ENCODE measurements at regions of chr4 and their contacts with region 1.

Region 1: GRCh38 chr4:21738821-21739220 is 209.8 kb downstream of the KCNIP4 start:
- DNase-seq: no peak
- ATAC-seq: no peak
- H3K4me3 ChIP-seq: no peak overlapping the region
- H3K27ac ChIP-seq: no peak overlapping the region
- H3K4me1 ChIP-seq: no peaks in the 10 kb centered on the region
- H3K27me3 ChIP-seq: no peaks in the 10 kb centered on the region
- CTCF ChIP-seq: no peak

Region 2: DNA sequence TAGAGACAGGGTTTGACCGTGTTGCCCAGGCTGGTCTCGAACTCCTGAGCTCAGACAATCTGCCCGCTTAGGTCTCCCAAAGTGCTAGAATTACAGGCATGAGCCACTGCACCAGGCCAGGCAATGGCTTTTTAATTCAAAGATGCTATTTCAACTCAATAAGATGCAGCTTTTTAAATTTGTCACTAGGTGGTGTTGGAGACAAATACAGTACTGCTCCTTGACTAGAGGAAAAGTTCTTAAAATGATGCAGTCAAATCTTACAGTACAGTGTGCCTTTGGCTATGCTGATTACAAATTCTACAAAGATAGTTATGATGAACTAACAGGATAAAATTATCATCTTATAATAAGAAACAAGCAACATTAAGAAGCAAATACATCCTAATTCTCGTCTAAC is 231.4 kb before region 1 on chr4:
- intact Hi-C with region 1: no loop called
- DNase-seq: no peak
- ATAC-seq: no peak
- H3K4me3 ChIP-seq: no peak overlapping the region
- H3K27ac ChIP-seq: no peak overlapping the region
- H3K4me1 ChIP-seq: no peaks in the 10 kb centered on the region
- H3K27me3 ChIP-seq: no peaks in the 10 kb centered on the region
- CTCF ChIP-seq: no peak

Region 3: DNA sequence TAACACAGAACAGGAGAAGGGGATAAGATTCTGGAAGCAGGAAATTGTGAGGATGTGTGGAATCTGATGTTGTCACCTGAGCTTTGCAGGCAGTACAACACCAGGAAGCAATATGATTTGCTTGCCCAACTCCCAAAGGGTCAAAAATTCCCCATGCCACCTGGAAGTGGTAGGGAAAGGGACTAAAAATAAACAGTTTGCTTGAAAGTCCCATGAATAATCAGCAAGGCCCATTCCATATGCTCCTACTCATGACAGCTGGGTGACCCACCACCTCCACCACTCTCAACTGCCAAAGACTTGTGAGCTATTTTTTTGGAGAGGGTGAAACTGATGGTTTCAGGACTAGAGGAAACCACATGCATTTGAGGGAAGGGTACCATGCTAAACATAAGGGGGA is 41.3 kb after region 1 on chr4:
- intact Hi-C with region 1: loop called in 1 of 10 experiments (anchors 1 kb)
- DNase-seq: no peak
- ATAC-seq: no peak
- H3K4me3 ChIP-seq: no peak overlapping the region
- H3K27ac ChIP-seq: no peak overlapping the region
- H3K4me1 ChIP-seq: no peaks in the 10 kb centered on the region
- H3K27me3 ChIP-seq: peaks cover 0 to 14% (median 0%) of the 10 kb centered on the region in 7 donors
- CTCF ChIP-seq: no peak

Region 4: DNA sequence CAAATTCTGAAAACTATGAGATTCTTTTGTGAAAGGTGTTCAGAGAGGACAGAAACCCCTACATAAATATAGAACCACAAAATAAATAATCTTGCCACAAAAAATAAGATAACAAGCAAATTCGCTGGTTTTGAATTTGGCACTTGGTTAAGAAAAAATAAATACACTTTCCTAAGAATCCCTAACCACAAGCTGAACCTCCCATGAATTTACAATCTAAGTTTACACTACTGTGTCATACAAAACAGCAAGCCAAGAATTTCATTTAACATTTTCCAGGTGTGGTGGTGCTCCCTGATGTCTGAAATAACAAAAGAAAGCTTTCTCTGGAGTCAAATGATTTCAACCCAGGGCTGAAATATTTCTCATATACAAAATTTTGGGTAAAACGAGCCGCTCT is 88.8 kb after region 1 on chr4:
- intact Hi-C with region 1: no loop called
- DNase-seq: no peak
- ATAC-seq: no peak
- H3K4me3 ChIP-seq: no peak overlapping the region
- H3K27ac ChIP-seq: no peak overlapping the region
- H3K4me1 ChIP-seq: no peaks in the 10 kb centered on the region
- H3K27me3 ChIP-seq: no peaks in the 10 kb centered on the region
- CTCF ChIP-seq: no peak